Naive thymus-derived CD4-positive, alpha-beta T cell (primary cell): ENCODE measurements at regions of chr10 and their contacts with region 1.

Region 1: GRCh38 chr10:3172446-3173170 is at the start of gene PITRM1:
- DNase-seq: peak; percentile 98 to 99 (median 99)
- ATAC-seq: peak; percentile 92
- H3K4me3 ChIP-seq: peak within 1 kb of the TSS; percentile 77
- H3K4me3 Mint-ChIP-seq: peak within 1 kb of the TSS; percentile 73 to 95 (median 88)
- H3K27ac ChIP-seq: peak within 1 kb of the TSS; percentile 82
- H3K27ac Mint-ChIP-seq: peak within 1 kb of the TSS; percentile 64 to 93 (median 88)
- H3K4me1 ChIP-seq: peaks cover 5 to 6% of the 10 kb centered on the region in 2 donors
- H3K4me1 Mint-ChIP-seq: peaks cover 9 to 31% (median 23%) of the 10 kb centered on the region in 7 donors
- H3K27me3 ChIP-seq: no peaks in the 10 kb centered on the region
- H3K27me3 Mint-ChIP-seq: peaks cover 0 to 33% (median 0%) of the 10 kb centered on the region in 5 donors
- total RNA-seq, gene PITRM1: 56.5 to 90.8 (median 85.4) TPM

Region 2: GRCh38 chr10:2791774-2792443 is 380.7 kb before region 1 on chr10:
- CTCF ChIA-PET with region 1: no interaction called
- POLR2A ChIA-PET with region 1: no interaction called
- intact Hi-C with region 1: no loop called
- DNase-seq: peak in 1 of 9 donors; percentile 27
- ATAC-seq: no peak
- H3K4me3 ChIP-seq: no peak overlapping the region
- H3K4me3 Mint-ChIP-seq: peak overlapping the region in 1 of 10 donors; percentile 29
- H3K27ac ChIP-seq: no peak overlapping the region
- H3K27ac Mint-ChIP-seq: no peak overlapping the region
- H3K4me1 ChIP-seq: no peaks in the 10 kb centered on the region
- H3K4me1 Mint-ChIP-seq: peaks cover 0 to 22% (median 0%) of the 10 kb centered on the region in 7 donors
- H3K27me3 ChIP-seq: no peaks in the 10 kb centered on the region
- H3K27me3 Mint-ChIP-seq: peaks cover 3 to 31% (median 15%) of the 10 kb centered on the region in 5 donors

Region 3: DNA sequence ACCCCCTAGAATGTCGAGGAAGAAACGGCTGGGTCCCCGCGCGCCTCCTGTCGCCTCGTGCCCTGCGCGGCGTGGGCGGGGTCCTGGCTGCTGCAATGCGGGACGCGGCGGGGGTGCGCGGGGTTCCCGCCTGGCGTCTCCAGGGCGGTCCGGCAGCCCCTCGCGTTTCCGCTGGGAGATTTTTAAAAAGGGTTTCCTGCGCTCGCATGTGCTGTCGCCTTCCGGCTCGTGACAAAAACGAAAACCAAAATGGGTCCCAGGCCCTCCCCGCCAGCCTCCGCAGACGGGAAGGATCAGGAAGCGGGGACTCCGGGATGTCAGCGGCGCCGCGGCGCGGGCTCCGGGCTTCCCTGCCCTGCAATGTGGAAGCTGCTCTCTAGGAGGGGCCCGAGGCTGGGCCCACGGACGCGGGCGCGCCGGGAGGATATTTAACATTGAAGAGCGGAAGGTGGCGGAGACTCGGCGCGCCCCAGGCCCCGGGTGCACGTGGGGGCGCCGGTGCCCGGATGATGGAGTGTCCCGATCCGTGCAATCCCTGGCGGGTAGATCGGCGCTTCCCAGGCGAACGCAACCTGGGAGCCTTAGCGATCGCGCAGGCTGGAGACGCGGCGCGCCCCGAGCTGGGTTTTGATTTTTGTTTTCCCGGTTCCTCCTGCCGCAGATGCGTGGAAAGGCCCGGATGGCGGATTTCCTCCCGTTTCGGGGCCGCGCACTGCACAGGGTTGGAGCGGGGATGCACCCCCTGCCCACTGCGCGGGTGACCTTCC is 104.2 kb before region 1 on chr10:
- CTCF ChIA-PET with region 1: no interaction called
- POLR2A ChIA-PET with region 1: no interaction called
- intact Hi-C with region 1: loop called (anchors 1 kb)
- DNase-seq: peak; percentile 26 to 76 (median 49)
- ATAC-seq: peak; percentile 61
- H3K4me3 ChIP-seq: peak overlapping the region; percentile 87
- H3K4me3 Mint-ChIP-seq: peak overlapping the region; percentile 80 to 98 (median 89)
- H3K27ac ChIP-seq: peak overlapping the region; percentile 70
- H3K27ac Mint-ChIP-seq: peak overlapping the region; percentile 8 to 90 (median 70)
- H3K4me1 ChIP-seq: peaks cover 8% of the 10 kb centered on the region in 2 donors
- H3K4me1 Mint-ChIP-seq: peaks cover 25 to 40% (median 34%) of the 10 kb centered on the region in 7 donors
- H3K27me3 ChIP-seq: no peaks in the 10 kb centered on the region
- H3K27me3 Mint-ChIP-seq: peaks cover 0 to 16% (median 0%) of the 10 kb centered on the region in 5 donors

Region 4: DNA sequence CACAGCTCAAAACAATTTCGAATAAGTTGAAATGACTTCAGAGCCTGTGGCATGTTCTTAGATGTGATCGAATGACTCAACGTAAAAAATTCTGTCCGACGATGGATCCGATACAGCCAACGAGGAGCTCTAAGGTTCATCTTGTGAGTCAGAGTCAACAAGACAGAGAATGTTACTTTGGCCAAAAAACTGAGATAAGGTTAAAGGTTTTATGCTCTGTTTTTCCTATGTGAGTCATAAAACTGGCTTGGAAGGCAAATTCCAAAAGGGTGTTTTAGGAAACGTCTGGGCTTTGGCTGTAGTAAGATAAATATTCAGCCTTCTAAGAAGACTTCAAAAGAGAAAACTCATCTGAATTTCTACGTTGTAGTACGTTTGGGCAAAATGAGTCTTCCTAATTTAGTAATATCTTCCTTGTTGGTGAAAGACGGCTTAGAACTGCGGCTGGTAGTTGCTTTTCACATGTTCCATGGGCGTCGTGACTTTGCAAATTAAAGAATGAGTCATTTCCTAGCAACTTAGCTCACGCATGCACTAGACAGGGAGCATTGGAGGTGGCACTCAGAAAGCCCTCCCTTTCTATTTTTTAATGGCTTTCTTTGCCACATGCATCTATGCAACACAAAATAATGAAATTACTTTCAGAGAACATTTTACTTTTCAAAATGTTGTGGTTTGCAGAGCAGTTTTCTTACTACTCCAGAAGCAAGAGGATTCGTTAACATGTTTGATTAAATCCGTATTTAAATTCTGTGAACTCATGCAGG is 77.1 kb before region 1 on chr10:
- CTCF ChIA-PET with region 1: no interaction called
- POLR2A ChIA-PET with region 1: no interaction called
- intact Hi-C with region 1: loop called in 1 of 2 experiments (anchors 1 kb)
- DNase-seq: peak in 1 of 9 donors; percentile 50
- ATAC-seq: peak; percentile 85
- H3K4me3 ChIP-seq: no peak overlapping the region
- H3K4me3 Mint-ChIP-seq: peak overlapping the region in 3 of 10 donors; percentile 23 to 72 (median 26)
- H3K27ac ChIP-seq: no peak overlapping the region
- H3K27ac Mint-ChIP-seq: peak overlapping the region in 2 of 9 donors; percentile 34 to 89
- H3K4me1 ChIP-seq: peaks cover 0 to 14% of the 10 kb centered on the region in 2 donors
- H3K4me1 Mint-ChIP-seq: peaks cover 34 to 56% (median 40%) of the 10 kb centered on the region in 7 donors
- H3K27me3 ChIP-seq: no peaks in the 10 kb centered on the region
- H3K27me3 Mint-ChIP-seq: no peaks in the 10 kb centered on the region

Region 5: GRCh38 chr10:3186368-3186767 is 13.8 kb after region 1 on chr10:
- CTCF ChIA-PET with region 1: interaction called, 3 read pairs
- POLR2A ChIA-PET with region 1: interaction called, 4 read pairs
- intact Hi-C with region 1: loop called (anchors 1 kb)
- DNase-seq: peak in 7 of 9 donors; percentile 62 to 85 (median 76)
- ATAC-seq: peak; percentile 97
- H3K4me3 ChIP-seq: no peak overlapping the region
- H3K4me3 Mint-ChIP-seq: peak overlapping the region in 9 of 10 donors; percentile 16 to 74 (median 42)
- H3K27ac ChIP-seq: no peak overlapping the region
- H3K27ac Mint-ChIP-seq: peak overlapping the region in 8 of 9 donors; percentile 49 to 87 (median 74)
- H3K4me1 ChIP-seq: no peaks in the 10 kb centered on the region
- H3K4me1 Mint-ChIP-seq: peaks cover 6 to 19% (median 8%) of the 10 kb centered on the region in 7 donors
- H3K27me3 ChIP-seq: no peaks in the 10 kb centered on the region
- H3K27me3 Mint-ChIP-seq: peaks cover 0 to 79% (median 0%) of the 10 kb centered on the region in 5 donors

Region 6: DNA sequence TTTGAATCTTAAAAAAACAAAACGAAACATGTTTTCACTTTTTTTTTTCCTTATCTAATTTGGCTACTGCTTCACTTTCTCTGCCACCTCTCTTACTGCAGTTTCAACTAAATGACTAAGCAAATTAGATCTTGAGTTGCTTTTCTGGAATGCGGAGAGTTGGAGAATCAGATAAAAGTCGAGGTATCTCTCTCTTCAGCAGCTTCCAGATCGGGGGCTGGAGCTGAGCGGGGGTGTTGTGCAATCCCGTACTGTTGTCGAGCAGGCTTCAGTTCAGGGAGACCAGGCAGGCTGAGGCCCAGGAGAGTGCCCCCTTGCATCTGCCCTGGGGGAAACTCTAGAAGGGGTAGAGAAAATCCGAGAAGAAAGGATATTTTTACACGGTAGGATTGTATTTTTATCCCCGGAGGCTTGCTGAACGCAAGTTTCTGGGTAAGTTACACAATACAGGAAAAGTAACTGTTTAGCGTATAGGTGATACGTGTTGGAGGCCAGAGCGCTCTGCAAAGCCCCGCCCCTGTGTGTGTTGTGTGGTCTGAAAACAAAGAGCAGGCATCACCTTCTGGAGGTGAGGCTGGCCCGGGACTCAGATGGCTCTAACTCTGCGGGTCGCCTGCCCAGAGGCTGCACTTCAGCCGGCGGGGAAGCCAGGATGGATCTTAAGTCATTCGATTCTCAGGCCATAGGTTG is 495.8 kb after region 1 on chr10:
- CTCF ChIA-PET with region 1: no interaction called
- POLR2A ChIA-PET with region 1: no interaction called
- intact Hi-C with region 1: loop called in 1 of 2 experiments (anchors 2 kb)
- DNase-seq: peak; percentile 34 to 85 (median 77)
- ATAC-seq: peak; percentile 91
- H3K4me3 ChIP-seq: peak overlapping the region; percentile 63
- H3K4me3 Mint-ChIP-seq: peak overlapping the region; percentile 82 to 98 (median 88)
- H3K27ac ChIP-seq: peak overlapping the region; percentile 65
- H3K27ac Mint-ChIP-seq: peak overlapping the region; percentile 36 to 96 (median 93)
- H3K4me1 ChIP-seq: peaks cover 33% of the 10 kb centered on the region in 2 donors
- H3K4me1 Mint-ChIP-seq: peaks cover 27 to 51% (median 40%) of the 10 kb centered on the region in 7 donors
- H3K27me3 ChIP-seq: no peaks in the 10 kb centered on the region
- H3K27me3 Mint-ChIP-seq: no peaks in the 10 kb centered on the region

Region 7: GRCh38 chr10:4825851-4826665 is 1653.5 kb after region 1 on chr10 and contains the start of gene AKR1E2:
- CTCF ChIA-PET with region 1: no interaction called
- POLR2A ChIA-PET with region 1: no interaction called
- intact Hi-C with region 1: loop called in 1 of 2 experiments (anchors 5 kb)
- DNase-seq: peak; percentile 56 to 91 (median 83)
- ATAC-seq: peak; percentile 93
- H3K4me3 ChIP-seq: peak within 1 kb of the TSS; percentile 10
- H3K4me3 Mint-ChIP-seq: peak within 1 kb of the TSS; percentile 61 to 89 (median 84)
- H3K27ac ChIP-seq: peak within 1 kb of the TSS; percentile 72
- H3K27ac Mint-ChIP-seq: peak within 1 kb of the TSS; percentile 12 to 94 (median 85)
- H3K4me1 ChIP-seq: peaks cover 2 to 6% of the 10 kb centered on the region in 2 donors
- H3K4me1 Mint-ChIP-seq: peaks cover 9 to 43% (median 29%) of the 10 kb centered on the region in 7 donors
- H3K27me3 ChIP-seq: peaks cover 0 to 3% of the 10 kb centered on the region in 2 donors
- H3K27me3 Mint-ChIP-seq: peaks cover 0 to 56% (median 31%) of the 10 kb centered on the region in 5 donors
- total RNA-seq, gene AKR1E2: 8.6 to 26.0 (median 25.1) TPM